Endothelial cell of umbilical vein (primary cell): ENCODE measurements at regions of chr18 and their contacts with region 1.

Region 1: GRCh38 chr18:51020536-51020935 is 9.5 kb upstream of the SMAD4 start:
- DNase-seq: no peak
- H3K4me3 ChIP-seq: no peak overlapping the region
- H3K27ac ChIP-seq: no peak overlapping the region
- H3K4me1 ChIP-seq: no peaks in the 10 kb centered on the region
- H3K27me3 ChIP-seq: no peaks in the 10 kb centered on the region
- CTCF ChIP-seq: no peak
- POLR2A ChIP-seq: no peak

Region 2: GRCh38 chr18:49874238-49874637 is 1146.3 kb before region 1 on chr18:
- CTCF ChIA-PET with region 1: no interaction called
- POLR2A ChIA-PET with region 1: no interaction called
- dilution Hi-C with region 1: no loop called
- intact Hi-C with region 1: loop called (anchors 5 kb)
- DNase-seq: no peak
- H3K4me3 ChIP-seq: no peak overlapping the region
- H3K27ac ChIP-seq: no peak overlapping the region
- H3K4me1 ChIP-seq: peaks cover 4% of the 10 kb centered on the region
- H3K27me3 ChIP-seq: peaks cover 15 to 16% of the 10 kb centered on the region in 2 experiments
- CTCF ChIP-seq: no peak
- POLR2A ChIP-seq: no peak

Region 3: DNA sequence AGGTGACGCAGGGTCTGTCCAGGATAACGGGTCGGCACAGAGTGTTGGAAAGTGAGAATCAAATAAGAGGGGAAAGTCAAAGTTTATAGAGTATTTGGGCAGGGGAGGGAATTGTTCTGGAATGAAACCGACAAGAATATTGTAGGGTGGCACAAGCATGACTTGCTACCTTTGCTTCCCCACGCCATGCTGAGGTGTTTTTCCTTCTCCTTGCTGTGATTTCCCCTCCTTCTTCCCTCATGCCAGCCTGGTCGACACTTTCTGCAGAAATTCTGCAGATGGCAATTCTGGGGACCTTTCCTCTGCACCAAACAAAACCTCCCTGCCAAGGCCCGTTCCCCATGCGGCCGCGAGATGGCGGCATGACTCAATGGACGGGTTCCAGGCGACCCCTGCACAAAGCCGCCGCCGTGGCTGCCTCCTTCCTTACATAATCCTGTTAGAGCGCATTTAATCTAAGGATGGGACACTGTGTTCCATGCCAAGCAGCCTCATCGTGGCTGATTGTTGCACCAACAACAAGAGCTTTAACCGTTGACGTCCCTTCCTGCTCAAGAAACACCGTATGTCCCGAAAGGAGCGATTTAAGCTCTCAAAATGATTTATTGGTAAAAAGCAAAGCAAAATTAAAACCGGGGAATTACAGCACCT is 200.7 kb before region 1 on chr18 and contains the start of gene MRO:
- CTCF ChIA-PET with region 1: no interaction called
- POLR2A ChIA-PET with region 1: no interaction called
- dilution Hi-C with region 1: no loop called
- intact Hi-C with region 1: no loop called
- DNase-seq: peak; percentile 78
- H3K4me3 ChIP-seq: no peak within 1 kb of the TSS
- H3K27ac ChIP-seq: no peak within 1 kb of the TSS
- H3K4me1 ChIP-seq: no peaks in the 10 kb centered on the region
- H3K27me3 ChIP-seq: peaks cover 2 to 6% of the 10 kb centered on the region in 2 experiments
- CTCF ChIP-seq: peak; percentile 93 to 94
- POLR2A ChIP-seq: no peak
- total RNA-seq, gene MRO: not detected in 2 replicates